PC-3 (cell line): ENCODE measurements at regions of chr17 and their contacts with region 1.

Region 1: GRCh38 chr17:58082870-58083490 is at the start of gene DYNLL2:
- DNase-seq: peak; percentile 93
- ATAC-seq: peak; percentile 86
- H3K4me3 ChIP-seq: peak within 1 kb of the TSS; percentile 97
- H3K27ac ChIP-seq: no peak within 1 kb of the TSS
- H3K4me1 ChIP-seq: peaks cover 22% of the 10 kb centered on the region
- H3K27me3 ChIP-seq: 0 out of 2 replicates have a peak, but pooled peaks cover 3% of the 10 kb centered on the region
- CTCF ChIP-seq: no peak
- total RNA-seq, gene DYNLL2: 38.0 and 50.3 TPM in 2 replicates

Region 2: DNA sequence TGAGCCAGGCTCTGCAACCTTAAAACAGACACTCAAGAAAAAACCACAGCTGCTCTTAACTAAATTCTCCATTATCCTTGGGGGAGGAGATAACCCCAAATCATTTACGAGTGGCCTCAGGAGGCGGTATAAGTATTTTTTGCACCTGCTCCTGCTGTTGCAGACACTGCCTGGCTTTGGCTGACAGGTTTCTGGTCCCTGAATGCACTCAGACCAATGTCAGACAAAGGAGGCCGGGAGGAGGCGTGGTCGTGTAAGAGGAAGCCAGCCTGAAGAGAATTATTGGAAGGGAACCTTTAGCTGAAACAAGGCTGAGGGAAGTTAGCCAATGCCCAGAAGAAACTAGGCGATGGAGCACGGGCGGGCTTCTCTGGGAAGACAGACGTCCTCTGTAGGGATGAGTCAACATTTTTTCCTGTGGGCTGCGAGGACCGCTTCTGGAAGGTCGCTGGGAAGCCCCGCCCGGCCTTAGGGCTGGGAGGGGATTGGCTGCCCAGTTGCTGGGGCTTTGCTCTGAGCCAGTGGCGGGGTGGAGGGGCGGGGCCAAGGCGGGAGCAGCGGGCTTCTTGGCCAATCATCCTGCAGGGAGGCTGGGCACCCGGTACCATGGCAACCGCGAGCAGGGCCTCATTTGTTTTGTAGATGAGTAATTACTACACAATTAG is 420.2 kb before region 1 on chr17:
- CTCF ChIA-PET with region 1: no interaction called
- POLR2A ChIA-PET with region 1: interaction called, 11 read pairs
- intact Hi-C with region 1: no loop called
- DNase-seq: peak; percentile 100
- ATAC-seq: peak; percentile 98
- H3K4me3 ChIP-seq: peak overlapping the region; percentile 44
- H3K27ac ChIP-seq: peak overlapping the region; percentile 83
- H3K4me1 ChIP-seq: peaks cover 20% of the 10 kb centered on the region
- H3K27me3 ChIP-seq: no peaks in the 10 kb centered on the region
- CTCF ChIP-seq: peak; percentile 24; the same call in 1 of the 2 replicates

Region 3: GRCh38 chr17:57823469-57824401 is 259.2 kb before region 1 on chr17:
- CTCF ChIA-PET with region 1: no interaction called
- POLR2A ChIA-PET with region 1: no interaction called
- intact Hi-C with region 1: no loop called
- DNase-seq: no peak
- ATAC-seq: no peak
- H3K4me3 ChIP-seq: no peak overlapping the region
- H3K27ac ChIP-seq: no peak overlapping the region
- H3K4me1 ChIP-seq: no peaks in the 10 kb centered on the region
- H3K27me3 ChIP-seq: no peaks in the 10 kb centered on the region; the same call in 1 of the 2 replicates
- CTCF ChIP-seq: no peak

Region 4: DNA sequence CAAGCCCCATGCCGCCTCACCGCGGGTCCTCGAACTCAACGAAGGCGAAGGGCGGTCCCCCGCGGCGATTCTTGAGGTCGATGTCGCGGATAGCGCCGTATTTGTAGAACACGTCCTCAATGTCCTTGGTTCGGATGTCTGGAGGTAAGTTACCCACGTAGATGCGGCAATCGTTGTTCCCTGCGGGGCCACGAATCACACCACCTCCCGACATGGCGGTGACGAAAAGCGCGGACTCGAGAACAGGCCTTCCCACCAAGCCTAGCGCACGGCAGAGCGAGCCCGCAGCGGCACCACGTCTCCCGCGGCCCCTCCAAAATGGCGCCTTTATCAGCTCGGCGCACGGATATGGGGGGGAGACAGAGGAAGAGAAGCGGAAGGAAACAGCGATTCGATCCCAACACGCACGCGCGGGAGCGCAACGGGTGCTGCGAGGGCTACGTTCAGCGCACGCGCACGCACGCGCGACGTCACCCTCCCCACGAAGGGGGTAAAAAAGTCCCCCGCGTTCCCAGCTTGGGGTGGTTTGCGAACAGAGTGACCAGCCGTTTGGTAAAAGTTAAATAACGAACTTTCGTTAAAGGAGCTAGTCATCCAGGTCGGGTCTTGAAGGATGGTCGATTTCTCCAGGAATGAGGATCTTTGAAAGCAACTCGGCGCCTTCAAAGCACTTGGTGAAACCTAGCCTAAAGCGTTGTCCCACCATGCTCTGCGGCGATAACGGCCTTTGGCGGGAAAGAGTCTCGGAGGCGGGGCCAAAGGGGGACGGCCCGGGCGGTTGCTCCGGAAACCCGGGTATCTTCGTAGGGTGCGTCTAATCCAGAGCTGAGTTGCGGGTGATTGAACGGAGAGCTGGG is 75.8 kb before region 1 on chr17 and contains the start of gene SRSF1:
- CTCF ChIA-PET with region 1: no interaction called
- POLR2A ChIA-PET with region 1: interaction called, 15 read pairs
- intact Hi-C with region 1: loop called (anchors 1 kb)
- DNase-seq: peak; percentile 99
- ATAC-seq: peak; percentile 87
- H3K4me3 ChIP-seq: peak within 1 kb of the TSS; percentile 96
- H3K27ac ChIP-seq: peak within 1 kb of the TSS; percentile 90
- H3K4me1 ChIP-seq: peaks cover 29% of the 10 kb centered on the region
- H3K27me3 ChIP-seq: no peaks in the 10 kb centered on the region
- CTCF ChIP-seq: no peak
- total RNA-seq, gene SRSF1: 325 and 342 TPM in 2 replicates

Region 5: GRCh38 chr17:58060596-58061191 is 22.3 kb before region 1 on chr17:
- CTCF ChIA-PET with region 1: no interaction called
- POLR2A ChIA-PET with region 1: no interaction called
- intact Hi-C with region 1: no loop called
- DNase-seq: no peak
- ATAC-seq: no peak
- H3K4me3 ChIP-seq: no peak overlapping the region
- H3K27ac ChIP-seq: no peak overlapping the region
- H3K4me1 ChIP-seq: peaks cover 12% of the 10 kb centered on the region
- H3K27me3 ChIP-seq: no peaks in the 10 kb centered on the region
- CTCF ChIP-seq: no peak

Region 6: GRCh38 chr17:58204796-58205195 is 121.8 kb after region 1 on chr17:
- CTCF ChIA-PET with region 1: no interaction called
- POLR2A ChIA-PET with region 1: interaction called, 16 read pairs
- intact Hi-C with region 1: no loop called
- DNase-seq: no peak
- ATAC-seq: no peak
- H3K4me3 ChIP-seq: no peak overlapping the region
- H3K27ac ChIP-seq: no peak overlapping the region
- H3K4me1 ChIP-seq: no peaks in the 10 kb centered on the region
- H3K27me3 ChIP-seq: no peaks in the 10 kb centered on the region
- CTCF ChIP-seq: no peak

Region 7: DNA sequence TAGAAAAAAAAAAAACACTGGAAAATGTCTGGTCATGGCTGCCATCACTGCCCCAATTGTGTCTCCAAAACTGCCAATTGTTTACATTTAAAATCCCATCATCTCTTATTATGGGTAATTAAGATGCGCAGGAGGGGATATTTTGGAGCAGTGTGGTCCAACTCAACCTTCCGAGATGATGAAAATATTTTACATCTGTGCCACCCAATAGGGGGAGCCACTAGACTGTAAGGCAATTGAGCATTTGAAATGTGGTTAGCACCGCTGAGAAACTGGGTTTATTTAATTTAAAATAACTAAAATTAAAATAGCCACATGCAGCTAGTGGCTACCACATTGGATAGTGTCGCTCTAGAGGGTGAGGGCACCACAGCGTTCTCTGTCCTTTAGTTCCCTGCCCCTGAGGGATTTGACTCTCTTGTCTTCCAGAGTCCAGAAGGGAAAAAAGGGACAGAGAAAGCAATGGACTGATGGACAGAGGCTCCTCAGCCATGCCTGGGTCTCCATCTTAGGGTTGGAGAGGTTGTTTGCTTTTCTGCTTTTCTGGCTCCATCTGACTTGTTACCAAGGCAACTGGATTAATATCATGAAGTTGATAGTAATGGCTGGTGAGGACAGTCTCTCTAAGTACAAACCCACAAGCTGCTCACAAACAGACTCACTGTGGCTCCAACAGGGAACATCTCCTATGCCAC is 194.3 kb after region 1 on chr17:
- CTCF ChIA-PET with region 1: no interaction called
- POLR2A ChIA-PET with region 1: no interaction called
- intact Hi-C with region 1: no loop called
- DNase-seq: peak; percentile 50
- ATAC-seq: no peak
- H3K4me3 ChIP-seq: no peak overlapping the region
- H3K27ac ChIP-seq: no peak overlapping the region
- H3K4me1 ChIP-seq: no peaks in the 10 kb centered on the region
- H3K27me3 ChIP-seq: 0 out of 2 replicates have a peak, but pooled peaks cover 19% of the 10 kb centered on the region
- CTCF ChIP-seq: peak; percentile 69

Region 8: GRCh38 chr17:59565171-59565969 is 1482.4 kb after region 1 on chr17 and contains the start of gene DHX40:
- CTCF ChIA-PET with region 1: no interaction called
- POLR2A ChIA-PET with region 1: interaction called, 10 read pairs
- intact Hi-C with region 1: no loop called
- DNase-seq: peak; percentile 91
- ATAC-seq: peak; percentile 82
- H3K4me3 ChIP-seq: peak within 1 kb of the TSS; percentile 95
- H3K27ac ChIP-seq: no peak within 1 kb of the TSS; the same call in 1 of the 2 replicates
- H3K4me1 ChIP-seq: peaks cover 8% of the 10 kb centered on the region
- H3K27me3 ChIP-seq: no peaks in the 10 kb centered on the region
- CTCF ChIP-seq: no peak
- total RNA-seq, gene DHX40: 36.6 and 38.9 TPM in 2 replicates